ENCODE measurements at regions of chr4 and their contacts with region 1.

Region 1: GRCh38 chr4:20422398-20422797 is 170.7 kb downstream of the SLIT2 start:
- DNase-seq: peak; percentile 56 to 74
- H3K4me3 ChIP-seq: no peak overlapping the region
- H3K27ac ChIP-seq: no peak overlapping the region
- H3K4me1 ChIP-seq: peaks cover 0 to 11% (median 5%) of the 10 kb centered on the region in 4 donors
- H3K27me3 ChIP-seq: no peaks in the 10 kb centered on the region
- CTCF ChIP-seq: peak in 5 of 7 experiments; percentile 36 to 77 (median 51)
- EP300 ChIP-seq: no peak
- POLR2A ChIP-seq: no peak

Region 2: DNA sequence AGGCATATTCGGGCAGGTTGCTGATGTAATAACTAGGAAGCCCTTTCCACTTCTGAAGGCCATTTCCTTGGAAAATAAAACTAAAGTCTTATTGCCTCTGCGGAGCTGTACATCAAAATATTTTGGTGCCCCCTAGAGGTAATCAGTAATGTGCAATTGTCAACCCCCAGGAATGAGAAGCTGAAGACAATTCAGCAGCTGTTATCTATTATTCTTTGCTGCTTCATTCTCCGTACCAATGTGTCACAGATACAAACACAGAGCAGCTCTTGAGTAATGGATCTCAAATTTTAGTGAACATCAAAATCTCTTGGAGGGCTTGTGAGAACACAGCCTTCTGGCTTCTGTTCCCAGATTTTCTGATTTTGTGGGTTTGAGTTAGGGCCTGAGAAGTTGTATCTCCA is 174.2 kb before region 1 on chr4:
- intact Hi-C with region 1: no loop called
- DNase-seq: peak in 1 of 2 donors; percentile 64
- H3K4me3 ChIP-seq: no peak overlapping the region
- H3K27ac ChIP-seq: no peak overlapping the region
- H3K4me1 ChIP-seq: peaks cover 0 to 30% (median 22%) of the 10 kb centered on the region in 4 donors
- H3K27me3 ChIP-seq: peaks cover 0 to 18% (median 13%) of the 10 kb centered on the region in 3 donors
- CTCF ChIP-seq: peak in 4 of 7 experiments; percentile 35 to 63 (median 52)
- EP300 ChIP-seq: no peak
- POLR2A ChIP-seq: no peak

Region 3: GRCh38 chr4:20284990-20285389 is 137.4 kb before region 1 on chr4:
- intact Hi-C with region 1: no loop called
- DNase-seq: no peak
- H3K4me3 ChIP-seq: no peak overlapping the region
- H3K27ac ChIP-seq: no peak overlapping the region
- H3K4me1 ChIP-seq: no peaks in the 10 kb centered on the region
- H3K27me3 ChIP-seq: no peaks in the 10 kb centered on the region
- CTCF ChIP-seq: no peak
- EP300 ChIP-seq: no peak
- POLR2A ChIP-seq: no peak

Region 4: GRCh38 chr4:20506827-20507226 is 84.4 kb after region 1 on chr4:
- intact Hi-C with region 1: no loop called
- DNase-seq: no peak
- H3K4me3 ChIP-seq: no peak overlapping the region
- H3K27ac ChIP-seq: no peak overlapping the region
- H3K4me1 ChIP-seq: peaks cover 0 to 3% (median 0%) of the 10 kb centered on the region in 4 donors
- H3K27me3 ChIP-seq: no peaks in the 10 kb centered on the region
- CTCF ChIP-seq: no peak
- EP300 ChIP-seq: no peak
- POLR2A ChIP-seq: no peak

Region 5: DNA sequence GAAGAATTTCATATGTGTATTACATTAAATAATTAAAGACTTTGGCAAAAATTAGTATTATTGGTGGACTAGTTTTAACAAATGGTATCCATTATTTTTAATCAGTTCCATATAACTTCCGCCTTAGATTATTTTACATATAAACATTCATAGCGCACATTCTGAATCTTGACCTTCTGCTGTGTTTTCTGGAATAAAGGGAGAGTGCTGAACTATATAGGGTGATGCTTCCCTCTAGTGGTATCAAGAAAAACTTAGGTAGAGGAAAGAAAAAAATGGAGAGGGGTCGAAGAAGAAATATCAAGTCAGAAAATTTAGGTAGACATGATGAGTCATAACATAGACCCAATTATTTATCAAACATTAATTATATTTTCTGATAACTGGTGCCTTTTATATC is 122.2 kb after region 1 on chr4:
- intact Hi-C with region 1: loop called (anchors 10 kb)
- DNase-seq: peak in 1 of 2 donors; percentile 78
- H3K4me3 ChIP-seq: no peak overlapping the region
- H3K27ac ChIP-seq: no peak overlapping the region
- H3K4me1 ChIP-seq: peaks cover 0 to 8% (median 0%) of the 10 kb centered on the region in 4 donors
- H3K27me3 ChIP-seq: no peaks in the 10 kb centered on the region
- CTCF ChIP-seq: peak in 5 of 7 experiments; percentile 7 to 53 (median 47)
- EP300 ChIP-seq: no peak
- POLR2A ChIP-seq: no peak

Region 6: DNA sequence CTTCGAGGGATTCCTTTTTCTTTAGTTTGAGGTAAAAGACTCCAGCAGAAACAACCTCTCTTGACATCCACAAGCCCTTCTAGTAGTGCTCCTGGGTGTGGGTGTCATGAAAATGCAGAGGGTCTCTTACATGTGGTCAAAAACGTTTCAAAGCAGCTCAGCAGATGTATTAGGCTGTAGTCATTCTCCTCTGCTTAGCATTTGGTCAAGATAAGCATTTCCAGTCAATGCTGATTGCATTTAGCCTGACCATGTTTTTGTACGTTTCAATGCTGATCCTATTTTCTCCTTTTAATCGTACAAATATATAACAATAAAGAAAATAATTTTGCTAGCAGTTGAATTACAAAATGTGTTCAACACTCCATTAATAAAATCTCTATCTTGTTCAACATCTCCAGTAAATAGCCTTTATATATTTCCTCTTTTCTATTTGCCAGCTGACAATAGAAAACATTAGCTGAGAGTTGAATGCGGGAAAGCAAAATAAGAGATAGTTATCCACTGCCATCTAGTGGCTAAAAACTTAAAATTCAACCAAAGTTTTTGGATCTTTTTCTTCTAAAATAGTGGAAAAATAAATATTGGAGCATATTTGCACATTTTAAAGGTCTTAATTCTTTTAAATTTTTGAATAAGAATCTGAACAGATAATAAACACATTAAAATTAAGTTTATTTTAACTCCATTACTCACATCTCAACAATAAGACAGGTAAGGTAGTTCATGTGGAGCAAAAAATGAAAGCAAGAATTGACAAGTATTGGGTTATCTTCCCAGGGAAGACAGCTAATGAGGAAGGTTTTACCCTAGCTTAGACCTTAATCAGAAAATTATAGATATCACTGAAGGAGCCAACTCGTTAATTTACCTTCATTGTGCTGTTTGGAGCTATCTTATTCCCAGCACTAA is 262.7 kb after region 1 on chr4:
- intact Hi-C with region 1: loop called (anchors 10 kb)
- DNase-seq: peak in 1 of 2 donors; percentile 45
- H3K4me3 ChIP-seq: no peak overlapping the region
- H3K27ac ChIP-seq: no peak overlapping the region
- H3K4me1 ChIP-seq: peaks cover 0 to 13% (median 4%) of the 10 kb centered on the region in 4 donors
- H3K27me3 ChIP-seq: no peaks in the 10 kb centered on the region
- CTCF ChIP-seq: peak in 4 of 7 experiments; percentile 10 to 63 (median 52)
- EP300 ChIP-seq: no peak
- POLR2A ChIP-seq: no peak

Measured in stomach (tissue), 19 donors.